ENCODE measurements at regions of chrX and their contacts with region 1.

Region 1: DNA sequence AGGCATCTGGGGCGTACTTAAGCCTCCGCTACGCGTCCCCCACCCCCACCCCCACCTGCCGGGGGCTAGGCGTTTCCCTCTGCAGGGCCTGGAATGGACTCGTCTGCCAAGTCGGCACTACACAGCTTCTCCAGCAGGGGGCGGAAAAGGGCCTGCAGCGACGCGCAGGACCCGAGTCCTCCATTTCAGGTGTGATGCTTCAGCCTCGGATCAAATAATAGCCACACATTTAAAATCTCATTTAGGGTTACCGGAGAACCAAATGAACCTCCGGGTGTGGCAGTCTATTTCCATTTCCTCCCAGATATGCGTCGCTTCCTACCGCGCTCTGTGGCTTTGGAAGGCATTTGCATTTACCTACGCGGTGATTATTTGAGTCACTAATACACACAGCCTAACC is 2.9 kb downstream of the PAK3 start:
- DNase-seq: no peak
- H3K4me3 ChIP-seq: no peak overlapping the region
- H3K27ac ChIP-seq: no peak overlapping the region
- H3K4me1 ChIP-seq: no peaks in the 10 kb centered on the region
- H3K27me3 ChIP-seq: no peaks in the 10 kb centered on the region
- CTCF ChIP-seq: peak; percentile 59 to 61

Region 2: DNA sequence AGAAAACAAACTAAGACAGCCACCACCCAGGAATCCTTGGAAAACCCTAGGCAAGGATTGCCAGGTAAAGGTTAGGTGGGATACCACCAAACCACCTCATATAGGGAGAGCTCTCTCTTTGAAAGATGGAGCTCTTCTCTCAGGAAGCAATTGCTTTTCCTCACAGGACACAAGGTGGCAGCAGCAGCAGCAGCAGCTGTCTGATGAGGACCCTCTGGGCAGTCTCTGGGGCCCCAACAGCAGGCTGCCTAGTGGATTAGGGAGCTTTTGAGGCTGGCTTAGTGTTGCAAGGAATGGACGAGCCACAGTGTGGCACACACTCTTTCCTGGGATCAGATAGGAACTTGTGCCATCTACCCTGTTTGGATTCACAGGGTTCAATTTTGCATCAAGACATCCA is 261.9 kb before region 1 on chrX:
- CTCF ChIA-PET with region 1: interaction called, 12 read pairs
- dilution Hi-C with region 1: no loop called
- in situ Hi-C with region 1: no loop called
- intact Hi-C with region 1: no loop called
- DNase-seq: no peak
- H3K4me3 ChIP-seq: no peak overlapping the region
- H3K27ac ChIP-seq: no peak overlapping the region
- H3K4me1 ChIP-seq: no peaks in the 10 kb centered on the region
- H3K27me3 ChIP-seq: peaks cover 3% of the 10 kb centered on the region
- CTCF ChIP-seq: peak in 1 of 2 donors; percentile 43

Region 3: GRCh38 chrX:110992611-110993010 is 106.3 kb before region 1 on chrX:
- CTCF ChIA-PET with region 1: no interaction called
- dilution Hi-C with region 1: no loop called
- in situ Hi-C with region 1: no loop called
- intact Hi-C with region 1: loop called (anchors 1 kb)
- DNase-seq: peak; percentile 20
- H3K4me3 ChIP-seq: no peak overlapping the region
- H3K27ac ChIP-seq: no peak overlapping the region
- H3K4me1 ChIP-seq: no peaks in the 10 kb centered on the region
- H3K27me3 ChIP-seq: no peaks in the 10 kb centered on the region
- CTCF ChIP-seq: peak; percentile 59 to 72

Region 4: GRCh38 chrX:111041018-111041462 is 57.8 kb before region 1 on chrX:
- CTCF ChIA-PET with region 1: no interaction called
- dilution Hi-C with region 1: no loop called
- in situ Hi-C with region 1: no loop called
- intact Hi-C with region 1: loop called (anchors 2 kb)
- DNase-seq: peak; percentile 89
- H3K4me3 ChIP-seq: no peak overlapping the region
- H3K27ac ChIP-seq: peak overlapping the region; percentile 95
- H3K4me1 ChIP-seq: peaks cover 32% of the 10 kb centered on the region
- H3K27me3 ChIP-seq: no peaks in the 10 kb centered on the region
- CTCF ChIP-seq: no peak

Region 5: DNA sequence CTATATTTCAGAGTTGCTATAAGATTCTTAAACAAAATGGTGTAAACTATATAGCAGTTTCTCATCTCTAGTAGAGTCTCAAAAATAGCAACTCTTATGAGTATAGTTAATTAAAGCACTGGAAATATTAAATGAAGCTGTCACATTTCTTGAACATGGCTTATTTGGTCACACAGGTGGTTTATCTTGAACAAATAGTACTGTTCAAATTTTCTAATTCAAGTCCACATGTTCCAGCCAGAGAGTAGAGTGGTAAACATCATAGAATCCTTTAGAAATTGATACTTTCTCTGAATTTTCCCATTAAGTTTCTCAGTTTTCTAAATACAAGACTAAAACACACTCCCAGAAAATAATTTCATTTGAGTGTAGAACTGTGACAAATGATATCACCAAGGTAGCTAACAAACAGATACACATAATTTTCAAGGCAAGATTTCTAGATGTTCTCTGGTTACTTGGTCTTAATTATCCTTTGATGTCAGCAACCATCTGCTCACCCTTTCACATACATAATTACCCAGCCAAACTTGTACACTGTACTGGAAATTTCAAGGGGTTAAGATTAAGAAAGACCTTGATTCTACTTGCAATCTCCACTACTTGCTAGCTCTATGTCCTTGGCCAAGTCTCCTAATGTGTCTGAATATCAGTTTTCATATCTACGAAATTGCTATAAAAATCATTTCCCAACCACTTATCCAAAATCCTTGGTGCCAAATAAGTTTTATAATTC is 27.2 kb before region 1 on chrX:
- CTCF ChIA-PET with region 1: no interaction called
- dilution Hi-C with region 1: no loop called
- in situ Hi-C with region 1: no loop called
- intact Hi-C with region 1: no loop called
- DNase-seq: no peak
- H3K4me3 ChIP-seq: no peak overlapping the region
- H3K27ac ChIP-seq: no peak overlapping the region
- H3K4me1 ChIP-seq: no peaks in the 10 kb centered on the region
- H3K27me3 ChIP-seq: no peaks in the 10 kb centered on the region
- CTCF ChIP-seq: no peak

Measured in mammary epithelial cell (primary cell).